Ascending aorta (tissue), 2 donors: ENCODE measurements at regions of chr2 and their contacts with region 1.

Region 1: GRCh38 chr2:240232961-240233893 is 92.8 kb upstream of the OTOS start:
- DNase-seq: peak in 1 of 2 donors; percentile 90
- H3K4me3 ChIP-seq: peak overlapping the region; percentile 34 to 61
- H3K27ac ChIP-seq: peak overlapping the region; percentile 53 to 76
- H3K4me1 ChIP-seq: peaks cover 6 to 22% of the 10 kb centered on the region in 2 donors
- H3K27me3 ChIP-seq: no peaks in the 10 kb centered on the region
- CTCF ChIP-seq: peak; percentile 91 to 97 (median 92)

Region 2: GRCh38 chr2:240200230-240201051 is 32.8 kb before region 1 on chr2:
- intact Hi-C with region 1: no loop called
- DNase-seq: peak in 1 of 2 donors; percentile 50
- H3K4me3 ChIP-seq: no peak overlapping the region
- H3K27ac ChIP-seq: no peak overlapping the region
- H3K4me1 ChIP-seq: no peaks in the 10 kb centered on the region
- H3K27me3 ChIP-seq: no peaks in the 10 kb centered on the region
- CTCF ChIP-seq: no peak

Region 3: DNA sequence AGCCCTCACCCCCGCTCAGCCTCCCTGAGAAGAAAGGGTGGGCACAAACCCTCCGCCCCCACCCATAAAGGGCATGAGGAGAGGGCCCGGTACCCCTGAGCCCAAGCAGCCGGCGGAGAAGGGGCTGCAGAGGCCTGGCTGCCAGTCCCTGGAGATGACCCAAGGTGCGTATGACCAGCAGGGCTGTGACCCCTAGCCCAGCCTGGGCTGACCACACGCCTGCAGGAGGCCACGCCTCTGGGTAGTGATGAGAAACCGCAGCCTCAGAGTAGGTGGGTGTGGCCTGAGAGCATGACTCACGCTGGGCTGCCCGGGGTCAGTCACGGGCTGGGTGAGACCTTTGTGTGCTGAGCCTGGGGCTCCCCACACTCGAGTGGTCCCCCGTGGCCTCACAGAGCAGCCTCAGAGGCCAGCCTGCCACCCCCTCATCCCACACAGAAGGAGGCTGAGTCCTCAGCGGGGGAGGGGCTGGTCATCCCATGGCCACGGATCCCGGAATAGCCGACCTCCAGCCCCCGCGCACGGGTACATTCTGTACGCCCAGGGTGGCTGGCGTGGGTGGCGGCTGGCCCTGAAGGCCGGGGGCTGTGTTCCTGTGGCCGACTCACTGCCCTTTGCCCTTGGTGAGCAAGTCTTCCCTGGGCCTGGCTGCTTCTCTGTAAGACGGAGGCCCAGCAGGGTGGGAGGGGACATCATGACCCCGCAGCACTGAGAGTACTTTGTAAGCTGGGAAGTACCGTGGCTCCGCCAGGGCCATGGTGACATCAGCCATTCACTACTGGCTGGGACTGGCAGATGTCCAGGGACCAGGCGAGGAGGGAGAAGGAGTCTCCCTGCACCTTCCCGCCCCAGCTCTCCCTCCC is 18.0 kb after region 1 on chr2:
- intact Hi-C with region 1: loop called (anchors 1 kb)
- DNase-seq: peak; percentile 93 to 98
- H3K4me3 ChIP-seq: peak overlapping the region in 1 of 2 donors; percentile 19
- H3K27ac ChIP-seq: peak overlapping the region; percentile 87 to 93
- H3K4me1 ChIP-seq: peaks cover 14 to 22% of the 10 kb centered on the region in 2 donors
- H3K27me3 ChIP-seq: no peaks in the 10 kb centered on the region
- CTCF ChIP-seq: no peak

Region 4: DNA sequence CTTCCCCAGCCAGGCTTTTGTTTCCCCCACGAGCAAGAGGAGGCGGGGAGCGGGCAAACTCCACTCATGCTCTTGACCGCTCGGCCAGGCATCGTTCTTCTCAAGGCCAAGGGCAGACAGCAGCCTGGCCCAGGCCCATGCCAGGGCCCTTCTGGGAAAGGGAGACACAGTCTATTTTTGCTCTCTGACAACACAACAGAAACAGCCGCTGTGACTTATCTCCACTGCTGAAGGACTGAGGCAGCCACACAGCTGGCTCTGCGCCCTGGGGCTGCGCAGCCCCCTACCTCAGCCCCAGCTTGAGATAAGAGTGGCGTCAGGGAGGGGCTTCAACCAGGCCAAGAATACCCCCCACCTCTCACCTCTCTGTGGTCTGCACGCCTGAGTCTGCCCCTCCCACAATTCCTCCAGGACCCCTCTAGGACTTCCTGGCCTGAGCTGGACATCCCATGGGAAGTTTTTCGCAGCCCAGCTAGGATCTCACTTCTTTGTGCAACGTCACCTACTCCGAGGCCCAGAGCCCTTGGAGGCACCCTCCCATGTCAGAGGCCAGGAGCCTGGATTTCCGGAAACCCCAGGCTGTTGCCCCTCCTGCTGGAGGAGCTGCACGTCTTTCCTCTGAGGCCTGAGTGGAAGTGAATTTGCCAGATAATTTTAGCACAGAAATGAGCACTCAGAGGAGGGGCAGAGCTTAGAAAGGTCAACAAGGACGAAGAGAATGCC is 26.1 kb after region 1 on chr2:
- intact Hi-C with region 1: loop called (anchors 1 kb)
- DNase-seq: peak; percentile 76 to 97
- H3K4me3 ChIP-seq: peak overlapping the region in 1 of 2 donors; percentile 8
- H3K27ac ChIP-seq: peak overlapping the region; percentile 94 to 98
- H3K4me1 ChIP-seq: peaks cover 18 to 26% of the 10 kb centered on the region in 2 donors
- H3K27me3 ChIP-seq: no peaks in the 10 kb centered on the region
- CTCF ChIP-seq: peak in 2 of 3 experiments; percentile 23 to 46

Region 5: GRCh38 chr2:240343176-240343947 is 110.1 kb after region 1 on chr2:
- intact Hi-C with region 1: loop called (anchors 1 kb)
- DNase-seq: no peak
- H3K4me3 ChIP-seq: no peak overlapping the region
- H3K27ac ChIP-seq: no peak overlapping the region
- H3K4me1 ChIP-seq: no peaks in the 10 kb centered on the region
- H3K27me3 ChIP-seq: no peaks in the 10 kb centered on the region
- CTCF ChIP-seq: no peak

Region 6: GRCh38 chr2:240369801-240370585 is 136.8 kb after region 1 on chr2:
- intact Hi-C with region 1: loop called (anchors 1 kb)
- DNase-seq: peak; percentile 24 to 92
- H3K4me3 ChIP-seq: peak overlapping the region in 1 of 2 donors; percentile 14
- H3K27ac ChIP-seq: peak overlapping the region; percentile 90 to 92
- H3K4me1 ChIP-seq: peaks cover 8 to 48% of the 10 kb centered on the region in 2 donors
- H3K27me3 ChIP-seq: no peaks in the 10 kb centered on the region
- CTCF ChIP-seq: no peak

Region 7: DNA sequence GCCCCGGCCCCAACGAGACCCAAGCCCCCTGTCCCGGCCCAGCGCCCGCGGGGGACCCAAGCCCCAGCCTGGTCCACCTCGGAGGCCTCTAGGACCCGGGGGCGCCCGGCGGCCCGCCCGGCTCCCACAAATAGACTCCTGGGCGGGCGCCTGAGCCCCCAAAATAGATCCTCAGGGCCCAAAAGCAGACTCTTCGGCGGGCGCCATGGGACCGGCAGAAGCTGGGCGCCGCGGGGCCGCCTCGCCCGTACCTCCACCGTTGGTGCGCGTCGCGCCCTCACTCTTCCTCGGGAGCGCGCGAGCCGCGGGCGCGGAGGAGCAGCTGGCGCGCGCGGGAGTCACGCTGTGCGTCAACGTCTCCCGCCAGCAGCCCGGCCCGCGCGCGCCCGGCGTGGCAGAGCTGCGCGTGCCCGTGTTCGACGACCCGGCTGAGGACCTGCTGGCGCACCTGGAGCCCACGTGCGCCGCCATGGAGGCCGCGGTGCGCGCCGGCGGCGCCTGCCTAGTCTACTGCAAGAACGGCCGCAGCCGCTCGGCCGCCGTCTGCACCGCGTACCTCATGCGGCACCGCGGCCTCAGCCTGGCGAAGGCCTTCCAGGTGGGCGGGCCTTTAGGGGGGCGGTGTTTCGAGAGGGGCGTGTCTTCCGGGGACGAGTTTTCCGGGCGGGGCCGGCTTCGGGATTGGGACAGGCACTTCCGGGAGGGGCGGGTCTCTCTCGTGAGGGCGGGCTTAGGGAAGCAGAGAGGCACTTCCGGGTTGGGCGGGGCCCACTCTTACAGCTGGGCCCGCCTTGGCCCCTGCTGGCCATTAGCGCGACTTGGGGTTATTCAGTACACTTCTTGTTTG is 327.5 kb after region 1 on chr2:
- intact Hi-C with region 1: loop called (anchors 2 kb)
- DNase-seq: peak; percentile 96 to 100
- H3K4me3 ChIP-seq: peak overlapping the region; percentile 68 to 72
- H3K27ac ChIP-seq: peak overlapping the region; percentile 94 to 98
- H3K4me1 ChIP-seq: peaks cover 20 to 29% of the 10 kb centered on the region in 2 donors
- H3K27me3 ChIP-seq: no peaks in the 10 kb centered on the region
- CTCF ChIP-seq: peak; percentile 30 to 34 (median 34)

Region 8: DNA sequence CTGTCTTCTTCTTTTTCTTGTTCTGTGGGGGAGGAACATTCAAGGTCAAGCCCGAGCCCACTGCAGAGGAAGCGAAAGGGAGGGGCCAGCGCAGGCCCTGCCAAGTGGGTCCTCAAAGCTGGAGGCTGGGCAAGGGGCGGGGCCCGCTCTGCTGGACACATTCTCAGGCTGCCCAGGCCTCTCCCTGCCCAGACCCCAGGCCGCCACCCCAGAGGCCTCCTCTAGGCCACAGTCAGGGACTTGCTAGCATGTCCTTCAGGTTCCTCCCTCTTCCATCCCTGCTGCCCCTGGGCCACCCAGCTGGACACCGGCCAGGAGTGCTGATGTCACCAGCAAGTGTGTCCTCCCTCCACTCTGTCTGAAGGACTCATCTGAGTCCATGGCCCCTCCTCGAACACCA is 542.7 kb after region 1 on chr2:
- intact Hi-C with region 1: no loop called
- DNase-seq: no peak
- H3K4me3 ChIP-seq: no peak overlapping the region
- H3K27ac ChIP-seq: no peak overlapping the region
- H3K4me1 ChIP-seq: no peaks in the 10 kb centered on the region
- H3K27me3 ChIP-seq: no peaks in the 10 kb centered on the region
- CTCF ChIP-seq: no peak